ENCODE measurements at regions of chr7 and their contacts with region 1.

Region 1: GRCh38 chr7:28878481-28878880 is 79.6 kb downstream of the TRIL start:
- DNase-seq: no peak
- H3K4me3 ChIP-seq: no peak overlapping the region
- H3K27ac ChIP-seq: no peak overlapping the region
- H3K4me1 ChIP-seq: no peaks in the 10 kb centered on the region
- H3K27me3 ChIP-seq: no peaks in the 10 kb centered on the region
- CTCF ChIP-seq: no peak

Region 2: DNA sequence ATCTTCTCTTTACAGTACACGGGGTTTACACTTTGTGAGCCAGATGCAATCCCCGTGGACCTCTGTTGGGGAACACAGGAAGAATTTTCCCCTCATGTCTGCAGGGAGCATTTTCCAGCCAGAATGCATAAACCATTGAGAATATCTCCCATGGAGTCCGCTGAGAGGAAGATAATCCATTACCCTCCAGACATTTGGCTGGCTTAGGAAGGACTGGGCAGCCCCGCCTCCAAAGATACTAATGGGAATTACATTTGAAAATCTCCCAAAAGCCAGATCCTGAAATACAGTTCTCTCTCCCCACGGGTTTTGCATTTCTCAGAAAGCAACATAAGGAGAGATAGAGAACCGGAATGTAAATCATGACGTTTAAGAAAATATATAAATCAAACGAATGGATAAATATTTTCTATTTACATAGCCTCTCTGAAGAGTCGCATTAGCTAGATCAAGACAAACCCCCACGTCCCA is 26.1 kb after region 1 on chr7:
- CTCF ChIA-PET with region 1: no interaction called
- POLR2A ChIA-PET with region 1: interaction called, 13 read pairs
- intact Hi-C with region 1: no loop called
- DNase-seq: no peak
- H3K4me3 ChIP-seq: peak overlapping the region; percentile 11; the same call in 1 of the 2 replicates
- H3K27ac ChIP-seq: no peak overlapping the region
- H3K4me1 ChIP-seq: no peaks in the 10 kb centered on the region
- H3K27me3 ChIP-seq: no peaks in the 10 kb centered on the region
- CTCF ChIP-seq: no peak

Region 3: GRCh38 chr7:29194594-29195427 is 316.3 kb after region 1 on chr7 and contains the start of gene CHN2:
- CTCF ChIA-PET with region 1: no interaction called
- POLR2A ChIA-PET with region 1: no interaction called
- intact Hi-C with region 1: no loop called
- DNase-seq: no peak
- H3K4me3 ChIP-seq: peak within 1 kb of the TSS; percentile 47; the same call in 1 of the 2 replicates
- H3K27ac ChIP-seq: no peak within 1 kb of the TSS
- H3K4me1 ChIP-seq: peaks cover 46% of the 10 kb centered on the region
- H3K27me3 ChIP-seq: no peaks in the 10 kb centered on the region
- CTCF ChIP-seq: no peak
- total RNA-seq, gene CHN2: not detected in 2 replicates